T-cell (primary cell): ENCODE measurements at regions of chr3 and their contacts with region 1.

Region 1: DNA sequence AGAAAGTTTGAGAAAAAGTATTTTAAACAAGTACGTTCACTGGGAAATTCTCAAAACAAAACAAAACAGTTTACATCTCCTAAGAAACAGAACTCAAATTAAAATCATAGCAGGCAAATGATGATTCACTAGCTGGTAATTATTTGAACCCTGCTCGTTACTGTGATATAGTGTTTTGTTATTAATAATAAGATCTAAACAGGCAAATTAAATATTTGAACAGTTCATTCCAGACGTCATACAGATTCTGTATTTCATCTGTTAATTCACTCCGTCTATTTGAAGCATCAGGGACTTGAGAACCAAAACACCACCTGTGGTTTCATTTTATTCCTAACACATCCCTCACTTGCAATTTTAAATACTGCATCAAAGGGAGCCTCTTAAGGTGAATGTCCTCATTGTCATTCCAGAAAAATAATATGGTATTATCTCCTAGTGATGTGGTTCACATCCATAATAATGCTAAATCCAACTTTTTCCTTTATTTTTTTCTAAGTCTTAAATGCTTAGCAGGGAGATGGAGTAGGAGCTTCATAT is 1390.9 kb upstream of the CADM2 start:
- DNase-seq: no peak
- ATAC-seq: no peak
- H3K4me3 ChIP-seq: no peak overlapping the region
- H3K4me3 Mint-ChIP-seq: no peak overlapping the region
- H3K27ac ChIP-seq: no peak overlapping the region
- H3K27ac Mint-ChIP-seq: no peak overlapping the region
- H3K4me1 ChIP-seq: no peaks in the 10 kb centered on the region
- H3K4me1 Mint-ChIP-seq: no peaks in the 10 kb centered on the region
- H3K27me3 ChIP-seq: no peaks in the 10 kb centered on the region
- H3K27me3 Mint-ChIP-seq: no peaks in the 10 kb centered on the region

Region 2: DNA sequence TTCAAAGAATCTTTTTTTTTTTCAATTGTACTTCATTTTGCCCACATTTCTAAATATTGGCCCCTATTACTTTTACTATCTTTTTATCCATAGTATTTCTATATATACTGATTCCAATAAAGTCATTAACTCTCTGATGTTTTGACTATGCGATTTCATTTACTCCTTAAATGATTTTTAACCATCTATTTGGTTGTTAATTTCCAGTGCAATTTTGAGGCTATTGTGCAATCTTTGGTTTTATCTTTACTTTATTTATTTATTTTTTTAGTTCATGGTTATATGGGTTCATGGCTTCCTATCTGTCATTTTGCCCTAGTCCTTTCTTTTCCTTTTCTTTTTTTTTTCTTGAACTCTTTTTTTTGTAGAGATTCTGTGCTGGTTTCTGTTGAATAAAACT is 398.4 kb before region 1 on chr3:
- CTCF ChIA-PET with region 1: no interaction called
- POLR2A ChIA-PET with region 1: interaction called in 1 of 2 experiments, 15 read pairs
- DNase-seq: no peak
- ATAC-seq: no peak
- H3K4me3 ChIP-seq: no peak overlapping the region
- H3K4me3 Mint-ChIP-seq: no peak overlapping the region
- H3K27ac ChIP-seq: no peak overlapping the region
- H3K27ac Mint-ChIP-seq: no peak overlapping the region
- H3K4me1 ChIP-seq: no peaks in the 10 kb centered on the region
- H3K4me1 Mint-ChIP-seq: no peaks in the 10 kb centered on the region
- H3K27me3 ChIP-seq: no peaks in the 10 kb centered on the region
- H3K27me3 Mint-ChIP-seq: no peaks in the 10 kb centered on the region

Region 3: DNA sequence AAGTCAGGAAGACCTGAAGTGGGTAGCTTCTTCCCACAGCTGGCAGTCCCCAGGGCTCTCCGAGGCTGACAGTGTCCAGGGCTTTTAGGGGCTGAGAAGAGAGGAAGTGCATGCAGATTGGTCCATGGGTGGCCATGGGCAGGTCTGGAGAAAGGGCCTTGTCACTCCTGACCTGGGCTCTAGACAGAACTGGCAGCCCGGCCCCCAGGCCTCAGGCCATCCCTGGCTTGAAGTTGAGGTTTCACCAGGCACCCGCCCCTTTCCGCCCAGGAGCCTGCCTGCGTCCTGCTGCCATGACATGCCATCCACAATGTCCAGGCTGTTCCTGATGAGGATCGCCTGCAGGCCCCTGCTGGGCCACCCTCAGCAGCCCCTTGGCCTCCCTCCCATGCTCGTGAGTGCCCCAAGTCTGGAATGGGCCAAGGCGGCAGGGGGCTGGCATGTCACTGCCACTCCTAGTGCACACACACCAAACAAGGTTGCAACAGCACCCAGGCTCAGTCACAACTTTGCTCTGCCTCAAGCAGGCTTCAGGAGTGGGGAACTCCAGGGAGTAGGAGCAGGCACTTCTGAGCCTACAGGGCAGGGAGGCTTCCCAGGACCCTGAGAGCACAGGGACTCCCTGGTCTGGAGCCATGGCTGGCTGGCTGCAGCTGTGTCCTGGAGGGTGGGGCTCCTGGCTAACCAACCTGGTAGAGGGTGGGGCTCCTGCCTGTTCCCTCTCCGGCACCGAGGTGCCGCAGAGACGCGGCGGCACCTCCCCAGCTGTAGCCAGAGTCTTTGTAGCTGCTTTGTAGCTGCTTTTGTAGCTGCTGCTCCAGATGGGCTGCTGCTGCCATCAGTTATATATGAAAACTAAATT is 349.3 kb before region 1 on chr3:
- CTCF ChIA-PET with region 1: no interaction called
- POLR2A ChIA-PET with region 1: no interaction called
- DNase-seq: peak in 1 of 35 experiments; percentile 2
- ATAC-seq: no peak
- H3K4me3 ChIP-seq: no peak overlapping the region
- H3K4me3 Mint-ChIP-seq: no peak overlapping the region
- H3K27ac ChIP-seq: no peak overlapping the region
- H3K27ac Mint-ChIP-seq: no peak overlapping the region
- H3K4me1 ChIP-seq: no peaks in the 10 kb centered on the region
- H3K4me1 Mint-ChIP-seq: no peaks in the 10 kb centered on the region
- H3K27me3 ChIP-seq: no peaks in the 10 kb centered on the region
- H3K27me3 Mint-ChIP-seq: no peaks in the 10 kb centered on the region